HepG2 (cell line): ENCODE measurements at regions of chr1 and their contacts with region 1.

Region 1: GRCh38 chr1:109213785-109214468 is at the start of gene SARS1:
- DNase-seq: peak; percentile 76
- ATAC-seq: peak; percentile 92
- H3K4me3 ChIP-seq: peak within 1 kb of the TSS; percentile 71 to 100 (median 74)
- H3K27ac ChIP-seq: peak within 1 kb of the TSS; percentile 72
- H3K4me1 ChIP-seq: peaks cover 46% of the 10 kb centered on the region
- H3K27me3 ChIP-seq: peaks cover 0 to 2% of the 10 kb centered on the region in 2 experiments; a peak in 1 of 5 replicates
- CTCF ChIP-seq: no peak
- EP300 ChIP-seq: no peak
- POLR2A ChIP-seq: peak in 1 of 2 experiments; percentile 63; a peak in 1 of 4 replicates
- RAD21 ChIP-seq: no peak
- total RNA-seq, gene SARS1: 134 and 166 TPM in 2 replicates

Region 2: DNA sequence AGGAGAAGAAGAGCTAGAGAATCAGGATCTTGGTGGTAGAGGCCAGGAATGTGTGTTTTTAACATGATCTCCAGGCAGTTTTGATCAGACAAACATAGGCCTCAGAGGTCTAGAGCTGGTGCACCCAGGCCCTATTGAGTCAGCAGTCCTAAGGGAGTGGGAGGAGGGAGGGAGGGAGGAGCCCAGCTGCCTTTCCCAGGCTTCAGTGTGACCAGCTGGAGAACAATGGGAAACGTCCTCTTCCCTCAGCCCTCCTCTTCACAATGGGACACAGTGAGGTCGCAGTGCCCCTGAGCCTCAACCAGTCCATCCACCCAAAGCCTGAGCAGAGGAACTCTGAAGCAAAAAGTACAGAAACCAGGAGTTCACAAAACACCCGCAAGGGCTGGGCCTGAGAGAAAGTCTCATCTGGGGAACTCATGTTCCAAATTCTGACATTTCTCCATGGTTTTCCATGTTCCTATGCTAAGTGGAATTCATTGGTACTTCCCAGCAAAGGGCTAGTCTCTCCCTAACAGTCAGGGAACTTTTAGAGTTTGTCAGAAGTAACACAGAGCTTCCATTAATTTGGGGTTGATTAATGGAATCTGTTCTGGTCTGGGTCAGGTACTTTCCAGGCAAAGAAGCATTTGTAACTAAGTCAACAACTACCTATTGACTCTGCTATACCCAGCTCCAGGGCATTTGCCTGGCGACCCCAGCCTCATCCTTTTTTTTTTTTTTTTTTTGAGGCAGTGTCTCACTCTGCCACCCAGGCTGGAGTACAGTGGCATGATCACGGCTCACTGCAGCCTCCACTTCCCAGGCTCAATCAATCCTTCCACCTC is 62.5 kb before region 1 on chr1:
- CTCF ChIA-PET with region 1: interaction called, 3 read pairs
- POLR2A ChIA-PET with region 1: interaction called, 10 read pairs
- in situ Hi-C with region 1: no loop called
- intact Hi-C with region 1: no loop called
- DNase-seq: peak; percentile 49
- ATAC-seq: peak; percentile 80
- H3K4me3 ChIP-seq: peak overlapping the region in 2 of 3 experiments; percentile 35 to 65; a peak in 3 of 6 replicates
- H3K27ac ChIP-seq: peak overlapping the region; percentile 3
- H3K4me1 ChIP-seq: peaks cover 67% of the 10 kb centered on the region
- H3K27me3 ChIP-seq: no peaks in the 10 kb centered on the region
- CTCF ChIP-seq: 0 out of 2 replicates have a peak, but pooled peaks have one; percentile 3
- EP300 ChIP-seq: no peak
- POLR2A ChIP-seq: no peak
- RAD21 ChIP-seq: no peak

Region 3: GRCh38 chr1:109181105-109181806 is 32.7 kb before region 1 on chr1:
- CTCF ChIA-PET with region 1: no interaction called
- POLR2A ChIA-PET with region 1: interaction called, 24 read pairs
- in situ Hi-C with region 1: no loop called
- intact Hi-C with region 1: no loop called
- DNase-seq: peak; percentile 96
- ATAC-seq: peak; percentile 88
- H3K4me3 ChIP-seq: peak overlapping the region in 1 of 3 experiments; percentile 31; a peak in 3 of 6 replicates
- H3K27ac ChIP-seq: peak overlapping the region; percentile 69
- H3K4me1 ChIP-seq: peaks cover 73% of the 10 kb centered on the region
- H3K27me3 ChIP-seq: no peaks in the 10 kb centered on the region; a peak in 1 of 5 replicates
- CTCF ChIP-seq: no peak
- EP300 ChIP-seq: peak in 1 of 2 experiments; percentile 87; a peak in 2 of 4 replicates
- POLR2A ChIP-seq: no peak
- RAD21 ChIP-seq: no peak

Region 4: DNA sequence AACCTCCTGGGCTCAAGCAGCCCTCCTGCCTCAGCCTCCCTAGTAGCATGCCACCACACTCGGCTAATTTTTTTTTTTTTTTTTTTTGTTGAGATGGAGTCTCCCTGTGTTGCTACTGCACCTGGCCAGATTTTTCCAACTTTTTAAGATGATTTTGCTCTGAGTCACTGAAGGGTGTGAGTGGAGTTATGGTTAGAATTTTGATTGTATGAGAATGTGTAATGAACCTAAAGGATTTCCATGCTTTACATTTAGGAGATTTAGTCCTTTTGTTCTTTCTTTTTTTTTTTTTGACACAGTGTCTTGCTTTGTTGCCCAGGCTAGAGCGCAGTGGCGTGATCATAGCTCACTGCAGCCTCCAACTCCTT is 12.1 kb after region 1 on chr1:
- CTCF ChIA-PET with region 1: no interaction called
- POLR2A ChIA-PET with region 1: interaction called, 15 read pairs
- in situ Hi-C with region 1: no loop called
- intact Hi-C with region 1: no loop called
- DNase-seq: no peak
- ATAC-seq: no peak
- H3K4me3 ChIP-seq: no peak overlapping the region
- H3K27ac ChIP-seq: no peak overlapping the region
- H3K4me1 ChIP-seq: peaks cover 12% of the 10 kb centered on the region
- H3K27me3 ChIP-seq: no peaks in the 10 kb centered on the region
- CTCF ChIP-seq: no peak
- EP300 ChIP-seq: no peak
- POLR2A ChIP-seq: no peak
- RAD21 ChIP-seq: no peak

Region 5: DNA sequence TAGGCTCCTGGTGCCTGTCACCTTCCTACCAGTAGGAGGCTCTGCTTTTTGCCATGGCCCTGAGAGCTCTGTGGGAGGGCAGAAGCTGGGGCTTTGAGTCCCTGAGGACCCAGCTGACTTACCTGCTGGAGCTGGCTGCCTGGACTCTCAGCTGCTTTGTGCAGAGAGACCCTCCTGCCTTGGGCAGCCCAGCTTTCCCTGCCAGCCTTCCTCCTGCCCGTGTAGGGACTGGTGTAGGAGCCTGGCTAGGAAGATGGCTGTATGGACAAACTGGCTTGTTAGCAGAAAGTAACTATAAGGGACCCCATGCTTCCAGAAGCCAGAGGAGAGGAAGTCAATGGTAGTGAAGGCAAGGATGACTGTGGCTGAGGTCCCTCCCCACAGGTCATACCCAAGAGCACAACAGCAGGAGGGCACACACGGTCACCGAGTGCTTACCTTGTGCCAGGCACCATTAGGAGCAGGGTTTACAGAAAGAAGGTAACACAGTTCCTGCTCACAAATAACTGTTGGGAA is 25.7 kb after region 1 on chr1:
- CTCF ChIA-PET with region 1: no interaction called
- POLR2A ChIA-PET with region 1: interaction called, 13 read pairs
- in situ Hi-C with region 1: no loop called
- intact Hi-C with region 1: no loop called
- DNase-seq: peak; percentile 66
- ATAC-seq: peak; percentile 94
- H3K4me3 ChIP-seq: no peak overlapping the region
- H3K27ac ChIP-seq: peak overlapping the region; percentile 20
- H3K4me1 ChIP-seq: peaks cover 38% of the 10 kb centered on the region
- H3K27me3 ChIP-seq: 0 out of 5 replicates have a peak, but pooled peaks cover 0 to 3% of the 10 kb centered on the region in 2 experiments
- CTCF ChIP-seq: peak; percentile 83
- EP300 ChIP-seq: no peak
- POLR2A ChIP-seq: no peak
- RAD21 ChIP-seq: peak; percentile 63